RWPE1 (cell line): ENCODE measurements at regions of chr20 and their contacts with region 1.

Region 1: GRCh38 chr20:43925801-43926200 is 11.1 kb downstream of the TOX2 start:
- DNase-seq: no peak
- H3K27ac ChIP-seq: no peak overlapping the region
- CTCF ChIP-seq: no peak

Region 2: DNA sequence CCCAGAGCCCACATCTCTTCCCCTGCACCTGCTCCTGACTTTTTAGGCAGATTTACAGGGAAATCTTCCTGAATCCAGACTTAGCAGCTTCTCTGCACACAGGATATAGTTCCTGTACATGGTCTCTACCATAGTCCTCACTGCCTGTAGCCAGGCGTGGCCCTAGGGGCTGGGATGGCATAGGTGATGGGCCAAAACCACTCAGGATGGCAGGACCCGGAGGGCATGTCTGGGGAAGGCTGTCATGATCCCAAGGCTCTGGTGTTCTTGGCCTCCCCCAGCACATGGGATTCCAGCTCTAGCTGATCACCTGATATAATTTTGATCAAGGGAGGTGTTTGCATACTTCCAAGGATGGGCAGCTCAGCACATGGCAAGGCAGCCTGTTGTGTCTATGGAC is 46.9 kb after region 1 on chr20:
- CTCF ChIA-PET with region 1: no interaction called
- POLR2A ChIA-PET with region 1: interaction called, 11 read pairs
- DNase-seq: no peak
- H3K27ac ChIP-seq: no peak overlapping the region
- CTCF ChIP-seq: no peak

Region 3: GRCh38 chr20:44166477-44166876 is 240.7 kb after region 1 on chr20:
- CTCF ChIA-PET with region 1: no interaction called
- POLR2A ChIA-PET with region 1: no interaction called
- DNase-seq: no peak
- H3K27ac ChIP-seq: peak overlapping the region; percentile 77
- CTCF ChIP-seq: no peak